HCT116 (cell line): ENCODE measurements at regions of chrX and their contacts with region 1.

Region 1: DNA sequence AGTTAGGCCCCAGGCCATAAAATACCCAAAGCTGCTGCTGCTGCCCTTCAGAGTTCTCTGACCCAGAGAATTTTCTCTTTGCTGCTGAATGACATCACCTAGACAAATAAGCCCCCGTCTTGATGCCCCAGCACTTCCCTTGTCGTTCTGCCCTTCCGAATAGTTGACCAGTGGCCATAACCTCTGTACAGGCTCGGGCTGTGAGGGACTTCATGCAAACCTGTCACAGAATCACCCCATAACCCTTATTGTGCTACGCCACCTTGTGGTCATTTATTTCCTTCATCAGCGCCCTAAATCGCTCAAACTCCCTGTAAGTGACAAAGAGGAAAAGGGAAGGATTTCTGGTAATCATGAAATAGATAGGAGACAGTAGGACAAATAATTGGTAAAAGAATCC is 18.8 kb downstream of the SPACA5 start:
- DNase-seq: peak; percentile 64
- ATAC-seq: peak; percentile 77
- H3K4me3 ChIP-seq: no peak overlapping the region
- H3K27ac ChIP-seq: no peak overlapping the region
- H3K4me1 ChIP-seq: no peaks in the 10 kb centered on the region
- H3K27me3 ChIP-seq: no peaks in the 10 kb centered on the region
- CTCF ChIP-seq: peak; percentile 43 to 65 (median 64); a peak in 5 of 6 replicates
- POLR2A ChIP-seq: no peak
- RAD21 ChIP-seq: peak; percentile 78

Region 2: GRCh38 chrX:47497273-47497672 is 528.3 kb before region 1 on chrX:
- CTCF ChIA-PET with region 1: no interaction called
- POLR2A ChIA-PET with region 1: no interaction called
- RAD21 ChIA-PET with region 1: no interaction called
- intact Hi-C with region 1: loop called (anchors 5 kb)
- DNase-seq: no peak
- ATAC-seq: no peak
- H3K4me3 ChIP-seq: no peak overlapping the region
- H3K27ac ChIP-seq: no peak overlapping the region
- H3K4me1 ChIP-seq: peaks cover 0 to 2% of the 10 kb centered on the region in 2 experiments; a peak in 1 of 4 replicates
- H3K27me3 ChIP-seq: no peaks in the 10 kb centered on the region
- CTCF ChIP-seq: peak; percentile 29 to 66 (median 43); a peak in 5 of 6 replicates
- POLR2A ChIP-seq: no peak
- RAD21 ChIP-seq: peak; percentile 75

Region 3: DNA sequence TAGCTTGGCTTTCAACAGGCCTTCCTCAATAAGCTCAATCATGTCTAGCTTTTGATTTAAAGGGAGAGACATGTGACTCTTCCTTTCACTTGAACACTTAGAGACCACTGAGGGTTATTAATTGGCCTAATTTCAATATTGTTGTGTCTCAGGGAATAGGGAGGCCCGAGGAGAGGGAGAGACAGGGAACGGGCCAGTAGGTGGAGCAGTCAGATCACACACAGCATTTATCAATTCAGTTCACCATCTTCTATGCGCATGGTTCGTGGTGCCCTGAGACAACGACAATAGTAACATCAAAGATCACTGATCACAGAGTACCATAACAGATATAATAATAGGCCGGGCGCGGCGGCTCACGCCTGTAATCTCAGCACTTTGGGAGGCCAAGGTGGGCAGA is 171.1 kb before region 1 on chrX:
- CTCF ChIA-PET with region 1: no interaction called
- POLR2A ChIA-PET with region 1: no interaction called
- RAD21 ChIA-PET with region 1: no interaction called
- intact Hi-C with region 1: loop called (anchors 1 kb)
- DNase-seq: no peak
- ATAC-seq: no peak; the same call in 1 of the 2 replicates
- H3K4me3 ChIP-seq: no peak overlapping the region
- H3K27ac ChIP-seq: no peak overlapping the region
- H3K4me1 ChIP-seq: no peaks in the 10 kb centered on the region
- H3K27me3 ChIP-seq: no peaks in the 10 kb centered on the region
- CTCF ChIP-seq: peak; percentile 35 to 43 (median 39); a peak in 4 of 6 replicates
- POLR2A ChIP-seq: no peak
- RAD21 ChIP-seq: peak; percentile 61

Region 4: GRCh38 chrX:48493890-48494364 is 468.4 kb after region 1 on chrX:
- CTCF ChIA-PET with region 1: no interaction called
- POLR2A ChIA-PET with region 1: no interaction called
- RAD21 ChIA-PET with region 1: no interaction called
- intact Hi-C with region 1: loop called (anchors 5 kb)
- DNase-seq: peak; percentile 38
- ATAC-seq: peak; percentile 48
- H3K4me3 ChIP-seq: no peak overlapping the region
- H3K27ac ChIP-seq: no peak overlapping the region
- H3K4me1 ChIP-seq: peaks cover 10 to 60% of the 10 kb centered on the region in 2 experiments
- H3K27me3 ChIP-seq: no peaks in the 10 kb centered on the region
- CTCF ChIP-seq: peak in 1 of 3 experiments; percentile 49; a peak in 2 of 6 replicates
- POLR2A ChIP-seq: no peak
- RAD21 ChIP-seq: no peak